ENCODE measurements at regions of chrX and their contacts with region 1.

Region 1: DNA sequence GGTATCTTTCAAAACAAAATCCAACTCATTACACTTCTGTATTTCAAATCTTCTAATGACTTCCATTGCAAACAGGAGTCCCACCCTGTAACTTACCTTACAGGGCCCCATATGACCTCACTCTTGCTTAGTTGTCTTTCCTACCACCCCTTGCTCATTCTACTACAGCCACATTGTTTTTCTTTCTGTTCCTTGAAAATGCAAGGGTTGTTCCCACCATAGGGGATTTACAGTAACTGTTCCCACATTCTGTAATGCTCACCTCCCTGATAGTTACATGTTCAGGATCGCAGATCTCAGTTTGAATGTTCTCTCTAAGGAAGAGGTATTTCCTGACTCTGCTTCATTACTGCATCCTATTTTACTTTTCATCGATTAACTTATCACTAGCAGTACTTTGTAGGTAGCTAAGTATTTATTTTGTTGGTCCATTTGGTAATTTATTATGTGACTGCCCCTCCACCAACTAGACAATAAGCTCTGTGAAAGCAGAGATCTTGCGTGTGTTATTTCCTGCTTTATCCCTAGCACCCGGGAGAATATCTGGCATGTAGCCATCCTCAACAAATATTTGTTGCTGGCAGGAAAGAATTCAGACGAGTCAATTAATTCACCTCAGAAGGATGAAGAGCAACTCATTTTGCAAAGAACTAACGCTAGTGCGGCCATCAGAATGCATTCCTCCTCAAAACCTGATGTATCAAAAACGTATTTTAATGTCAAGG is 21.4 kb downstream of the MAOB start:
- DNase-seq: no peak
- ATAC-seq: peak in 1 of 4 donors; percentile 28
- H3K4me3 ChIP-seq: peak overlapping the region; percentile 37
- H3K27ac ChIP-seq: peak overlapping the region; percentile 78
- H3K4me1 ChIP-seq: peaks cover 10% of the 10 kb centered on the region
- H3K27me3 ChIP-seq: peaks cover 0 to 22% (median 0%) of the 10 kb centered on the region in 3 donors
- CTCF ChIP-seq: no peak

Region 2: GRCh38 chrX:43349363-43349762 is 511.4 kb before region 1 on chrX:
- intact Hi-C with region 1: no loop called
- DNase-seq: no peak
- ATAC-seq: no peak
- H3K4me3 ChIP-seq: no peak overlapping the region
- H3K27ac ChIP-seq: no peak overlapping the region
- H3K4me1 ChIP-seq: no peaks in the 10 kb centered on the region
- H3K27me3 ChIP-seq: peaks cover 0 to 2% (median 0%) of the 10 kb centered on the region in 3 donors
- CTCF ChIP-seq: peak; percentile 43

Region 3: GRCh38 chrX:43809463-43809862 is 51.3 kb before region 1 on chrX:
- intact Hi-C with region 1: no loop called
- DNase-seq: no peak
- ATAC-seq: peak in 1 of 4 donors; percentile 56
- H3K4me3 ChIP-seq: no peak overlapping the region
- H3K27ac ChIP-seq: no peak overlapping the region
- H3K4me1 ChIP-seq: peaks cover 3% of the 10 kb centered on the region
- H3K27me3 ChIP-seq: peaks cover 0 to 4% (median 0%) of the 10 kb centered on the region in 3 donors
- CTCF ChIP-seq: no peak

Region 4: GRCh38 chrX:43899878-43900815 is 39.3 kb after region 1 on chrX:
- intact Hi-C with region 1: loop called in 1 of 2 experiments (anchors 5 kb)
- DNase-seq: no peak
- ATAC-seq: peak; percentile 67 to 80 (median 74)
- H3K4me3 ChIP-seq: no peak overlapping the region
- H3K27ac ChIP-seq: peak overlapping the region; percentile 67
- H3K4me1 ChIP-seq: peaks cover 7% of the 10 kb centered on the region
- H3K27me3 ChIP-seq: peaks cover 0 to 8% (median 0%) of the 10 kb centered on the region in 3 donors
- CTCF ChIP-seq: no peak